ENCODE measurements at regions of chr6 and their contacts with region 1.

Region 1: DNA sequence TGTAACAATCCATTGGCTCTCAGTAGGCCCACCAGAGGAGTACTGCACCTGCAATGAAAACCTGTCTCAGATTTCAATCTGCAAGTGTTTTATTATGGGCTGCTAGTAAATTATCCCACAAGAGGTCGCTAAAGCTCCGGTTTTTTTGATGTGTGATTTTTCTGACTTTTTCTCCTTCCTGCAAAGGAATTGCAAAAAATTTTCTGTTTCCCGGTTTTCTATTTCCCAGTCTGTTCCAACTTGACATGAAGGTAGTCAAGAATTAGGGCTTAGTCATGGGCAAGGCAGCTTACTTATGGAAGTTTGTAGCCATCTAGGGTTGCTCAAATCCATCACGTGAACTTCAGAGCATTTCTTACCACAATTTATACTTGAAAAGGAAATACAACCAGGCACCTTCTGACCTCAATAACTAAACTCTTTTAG is 38.5 kb upstream of the AHI1 start:
- DNase-seq: peak; percentile 22 to 36
- H3K4me3 ChIP-seq: no peak overlapping the region
- H3K4me1 ChIP-seq: no peaks in the 10 kb centered on the region
- H3K27me3 ChIP-seq: no peaks in the 10 kb centered on the region; the same call in 1 of the 2 replicates

Region 2: DNA sequence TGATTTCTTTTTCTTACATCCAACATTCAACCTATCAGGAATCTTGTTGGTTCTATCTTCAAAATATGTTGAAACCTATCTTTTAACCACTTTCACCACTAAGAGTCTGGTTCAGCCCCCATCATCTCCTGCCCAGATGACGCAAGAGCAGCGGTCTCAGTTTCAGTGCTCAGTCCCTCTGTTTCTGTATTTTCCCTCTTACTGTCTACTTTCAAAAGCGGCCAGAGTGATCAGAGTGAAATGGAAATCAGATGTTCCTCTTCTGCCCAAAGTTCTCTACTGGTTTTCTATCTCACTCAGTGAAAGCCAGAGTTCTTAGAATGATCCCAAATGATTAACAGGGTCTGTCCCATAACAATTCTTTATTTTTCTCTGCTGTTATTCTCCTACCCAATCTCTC is 167.6 kb after region 1 on chr6:
- in situ Hi-C with region 1: no loop called
- DNase-seq: no peak
- H3K4me3 ChIP-seq: no peak overlapping the region
- H3K4me1 ChIP-seq: no peaks in the 10 kb centered on the region
- H3K27me3 ChIP-seq: no peaks in the 10 kb centered on the region

Region 3: DNA sequence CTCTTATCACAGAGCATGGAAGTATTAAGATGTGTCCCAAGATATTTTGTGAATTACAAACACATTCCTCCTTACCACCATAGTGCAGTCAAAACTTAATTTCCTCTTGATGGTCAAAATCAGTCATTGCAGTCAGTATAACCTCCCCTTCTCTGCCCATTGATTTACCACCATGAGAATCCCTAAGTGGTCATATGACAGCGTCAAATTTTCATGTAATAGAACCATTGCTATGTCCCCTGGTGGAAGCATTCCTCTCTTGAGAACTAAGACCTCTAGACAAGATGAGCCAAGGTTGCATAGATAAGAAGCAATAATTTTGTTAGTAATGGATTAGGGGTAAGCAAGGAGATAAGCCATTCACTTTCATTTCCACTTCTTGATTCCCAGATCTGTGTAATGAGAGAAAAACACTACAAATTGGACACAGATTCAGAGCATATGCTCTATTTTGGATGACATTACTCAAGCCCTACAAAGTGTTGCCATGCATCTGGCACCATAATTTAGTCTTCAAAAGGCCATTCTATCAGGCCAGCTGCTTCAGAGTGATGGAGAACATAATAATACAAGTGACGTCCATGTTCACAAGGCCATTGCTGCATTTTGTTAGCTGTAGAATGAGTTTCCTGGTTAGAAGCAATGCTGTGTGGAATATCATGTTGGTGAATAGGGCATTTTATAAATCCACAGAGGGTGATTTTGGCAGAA is 265.9 kb after region 1 on chr6:
- in situ Hi-C with region 1: no loop called
- DNase-seq: no peak
- H3K4me3 ChIP-seq: no peak overlapping the region
- H3K4me1 ChIP-seq: no peaks in the 10 kb centered on the region
- H3K27me3 ChIP-seq: no peaks in the 10 kb centered on the region

Region 4: GRCh38 chr6:135909737-135910387 is 373.9 kb after region 1 on chr6:
- in situ Hi-C with region 1: loop called (anchors 25 kb)
- DNase-seq: peak; percentile 60 to 70
- H3K4me3 ChIP-seq: no peak overlapping the region
- H3K4me1 ChIP-seq: peaks cover 4% of the 10 kb centered on the region; the same call in 1 of the 2 replicates
- H3K27me3 ChIP-seq: no peaks in the 10 kb centered on the region

Region 5: DNA sequence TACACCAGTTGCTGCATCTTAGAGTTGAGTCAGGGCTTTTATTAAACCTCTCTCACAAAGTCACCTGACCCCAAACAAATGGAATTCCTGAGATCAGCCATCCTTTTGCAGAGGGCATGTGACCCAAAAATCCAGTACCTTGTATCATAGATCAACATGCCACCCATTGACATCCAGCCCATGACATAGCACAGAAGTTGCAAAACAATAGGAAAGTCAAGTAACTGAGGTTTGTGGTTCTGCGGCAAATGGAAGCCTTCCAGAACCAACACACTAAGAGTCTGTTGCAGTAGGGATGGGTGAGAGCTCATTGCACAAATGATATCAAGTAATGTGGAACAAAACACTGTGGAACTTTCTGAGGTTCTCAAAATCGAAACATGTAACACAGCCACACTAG is 426.7 kb after region 1 on chr6:
- in situ Hi-C with region 1: no loop called
- DNase-seq: no peak
- H3K4me3 ChIP-seq: no peak overlapping the region
- H3K4me1 ChIP-seq: no peaks in the 10 kb centered on the region
- H3K27me3 ChIP-seq: no peaks in the 10 kb centered on the region

Region 6: GRCh38 chr6:136226027-136226673 is 690.1 kb after region 1 on chr6:
- in situ Hi-C with region 1: loop called (anchors 10 kb)
- DNase-seq: peak; percentile 31 to 62
- H3K4me3 ChIP-seq: no peak overlapping the region
- H3K4me1 ChIP-seq: 0 out of 2 replicates have a peak, but pooled peaks cover 2% of the 10 kb centered on the region
- H3K27me3 ChIP-seq: no peaks in the 10 kb centered on the region

Measured in HAP-1 (cell line).